ENCODE measurements at regions of chr2 and their contacts with region 1.

Region 1: DNA sequence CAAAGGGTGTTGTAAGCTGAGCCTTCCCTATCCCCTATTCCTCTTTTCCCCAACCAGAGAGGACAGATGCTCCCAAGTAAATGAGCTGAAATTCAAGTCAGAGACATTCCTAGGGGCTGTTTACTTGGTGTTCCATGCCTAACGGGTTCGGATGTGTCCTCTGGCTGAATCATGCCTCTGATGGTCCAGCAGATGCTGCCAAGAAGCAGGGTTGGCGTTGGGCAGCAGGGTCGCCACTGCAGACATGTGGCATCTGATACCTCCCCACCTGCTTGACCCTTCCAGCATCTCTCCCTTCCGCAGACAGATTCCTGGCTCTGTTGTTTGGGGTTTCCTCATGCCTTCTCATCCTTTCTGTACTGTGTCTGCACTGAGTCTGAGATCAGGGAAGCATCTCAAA is 108.3 kb downstream of the HNRNPLL start:
- DNase-seq: no peak
- ATAC-seq: peak; percentile 9 to 13; a peak in 2 of 6 replicates
- H3K4me3 ChIP-seq: no peak overlapping the region
- H3K27ac ChIP-seq: no peak overlapping the region
- H3K4me1 ChIP-seq: peaks cover 11% of the 10 kb centered on the region; the same call in 2 of the 3 replicates
- CTCF ChIP-seq: no peak
- EP300 ChIP-seq: no peak
- POLR2A ChIP-seq: no peak
- RAD21 ChIP-seq: no peak

Region 2: DNA sequence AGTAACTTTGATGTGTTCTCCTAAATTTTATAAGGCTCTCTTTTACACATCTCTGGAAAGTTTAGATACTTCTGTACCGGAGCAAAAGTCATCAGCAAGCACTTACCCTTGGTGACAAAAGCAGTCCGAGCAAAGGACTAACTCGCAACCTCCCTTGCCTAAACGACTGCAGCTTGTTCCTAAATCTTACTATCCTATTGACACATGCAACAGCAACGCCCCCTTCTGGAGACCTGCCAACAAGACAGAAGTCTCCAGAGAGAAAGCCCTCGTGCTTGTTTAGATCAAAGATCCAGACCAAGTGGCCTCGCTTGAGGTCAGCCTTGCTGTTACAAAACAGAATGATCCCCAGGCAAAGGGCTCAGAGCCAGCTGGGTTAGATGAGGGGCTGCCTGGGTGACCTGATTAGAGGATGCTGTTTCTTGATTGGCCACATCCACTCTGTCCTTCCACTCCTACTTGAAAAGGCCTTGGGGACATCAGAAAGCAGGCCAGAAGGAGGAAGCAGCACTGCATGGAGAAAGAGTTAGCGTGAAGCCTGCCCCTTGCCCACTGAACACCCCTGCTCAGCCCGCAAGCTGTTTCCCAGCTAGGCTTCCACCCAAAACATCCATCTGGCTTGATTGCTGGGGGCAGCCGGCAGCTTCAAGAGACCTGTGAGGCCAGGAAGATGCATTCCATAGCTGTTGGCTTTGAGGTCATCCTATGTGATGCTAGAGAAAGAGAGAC is 14.1 kb after region 1 on chr2:
- CTCF ChIA-PET with region 1: interaction called, 11 read pairs
- POLR2A ChIA-PET with region 1: no interaction called
- DNase-seq: peak; percentile 61 to 83
- ATAC-seq: peak; percentile 38 to 79; a peak in 3 of 6 replicates
- H3K4me3 ChIP-seq: no peak overlapping the region
- H3K27ac ChIP-seq: peak overlapping the region; percentile 25 to 67
- H3K4me1 ChIP-seq: peaks cover 14% of the 10 kb centered on the region
- CTCF ChIP-seq: peak; percentile 57
- EP300 ChIP-seq: no peak
- POLR2A ChIP-seq: no peak
- RAD21 ChIP-seq: peak; percentile 65 to 78